ENCODE measurements at regions of chr7 and their contacts with region 1.

Region 1: GRCh38 chr7:22872096-22872807 is 49.6 kb upstream of the TOMM7 start:
- DNase-seq: no peak
- ATAC-seq: peak; percentile 69
- H3K4me3 Mint-ChIP-seq: no peak overlapping the region
- H3K27ac Mint-ChIP-seq: no peak overlapping the region
- H3K4me1 Mint-ChIP-seq: peaks cover 11% of the 10 kb centered on the region
- H3K27me3 Mint-ChIP-seq: peaks cover 2% of the 10 kb centered on the region

Region 2: DNA sequence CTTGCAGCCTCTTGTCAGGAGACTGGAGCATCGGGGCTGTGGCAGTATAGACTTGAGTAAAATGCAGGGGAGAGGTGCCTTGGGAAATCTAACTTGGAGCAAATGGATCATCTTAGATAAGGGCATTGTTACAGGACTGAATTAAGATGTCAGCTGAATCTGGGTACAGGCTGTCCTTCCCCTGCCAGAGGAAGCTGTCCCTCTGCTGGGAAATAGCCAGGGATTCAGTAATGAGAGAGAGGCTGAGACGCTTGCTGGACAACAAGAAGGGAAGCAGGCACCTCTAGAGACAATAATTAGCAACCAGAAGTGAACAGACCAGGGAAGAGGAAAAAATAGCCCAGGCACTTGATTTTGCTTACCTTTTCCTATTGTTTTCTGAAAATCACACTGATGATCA is 494.5 kb before region 1 on chr7:
- CTCF ChIA-PET with region 1: no interaction called
- DNase-seq: no peak
- ATAC-seq: no peak
- H3K4me3 Mint-ChIP-seq: no peak overlapping the region
- H3K27ac Mint-ChIP-seq: no peak overlapping the region
- H3K4me1 Mint-ChIP-seq: no peaks in the 10 kb centered on the region
- H3K27me3 Mint-ChIP-seq: peaks cover 23% of the 10 kb centered on the region

Region 3: GRCh38 chr7:22802426-22802825 is 69.8 kb before region 1 on chr7:
- CTCF ChIA-PET with region 1: no interaction called
- DNase-seq: no peak
- ATAC-seq: no peak
- H3K4me3 Mint-ChIP-seq: no peak overlapping the region
- H3K27ac Mint-ChIP-seq: no peak overlapping the region
- H3K4me1 Mint-ChIP-seq: no peaks in the 10 kb centered on the region
- H3K27me3 Mint-ChIP-seq: peaks cover 18% of the 10 kb centered on the region

Region 4: GRCh38 chr7:22860784-22861482 is 11.3 kb before region 1 on chr7:
- CTCF ChIA-PET with region 1: interaction called, 26 read pairs
- DNase-seq: no peak
- ATAC-seq: peak; percentile 41
- H3K4me3 Mint-ChIP-seq: no peak overlapping the region
- H3K27ac Mint-ChIP-seq: no peak overlapping the region
- H3K4me1 Mint-ChIP-seq: peaks cover 35% of the 10 kb centered on the region
- H3K27me3 Mint-ChIP-seq: no peaks in the 10 kb centered on the region